Body of pancreas (tissue), 4 donors: ENCODE measurements at regions of chr7 and their contacts with region 1.

Region 1: DNA sequence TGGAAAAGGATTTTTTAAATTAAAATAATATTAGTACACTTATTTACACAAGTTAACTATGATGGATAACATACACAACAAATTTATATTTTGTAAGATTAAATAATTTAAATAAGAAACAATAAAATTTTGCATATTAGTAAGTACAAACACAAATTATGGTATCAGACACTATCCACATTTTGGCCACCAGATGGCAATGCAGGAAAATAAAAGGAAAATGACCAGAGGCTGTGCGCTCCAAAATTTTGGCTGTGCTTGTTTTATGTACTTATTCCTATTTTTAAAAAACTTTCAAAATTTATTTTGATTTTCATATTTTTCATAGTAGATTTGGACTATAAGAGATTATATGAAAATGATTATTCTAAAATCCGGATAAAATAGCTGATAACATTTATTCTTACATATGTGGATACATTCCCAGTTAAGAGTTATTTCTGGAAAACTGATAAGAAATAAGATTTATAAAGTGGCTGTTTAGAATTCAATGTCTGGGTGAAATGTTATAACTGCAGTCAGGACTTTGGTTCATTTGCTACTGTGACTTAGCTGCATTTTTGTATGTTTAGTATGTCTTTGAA is 274.7 kb upstream of the HGF start:
- DNase-seq: peak; percentile 33 to 49 (median 48)
- ATAC-seq: peak; percentile 67
- H3K4me3 ChIP-seq: no peak overlapping the region
- H3K27ac ChIP-seq: no peak overlapping the region
- H3K4me1 ChIP-seq: no peaks in the 10 kb centered on the region
- H3K27me3 ChIP-seq: no peaks in the 10 kb centered on the region
- CTCF ChIP-seq: peak; percentile 13 to 71 (median 68)
- POLR2A ChIP-seq: no peak

Region 2: DNA sequence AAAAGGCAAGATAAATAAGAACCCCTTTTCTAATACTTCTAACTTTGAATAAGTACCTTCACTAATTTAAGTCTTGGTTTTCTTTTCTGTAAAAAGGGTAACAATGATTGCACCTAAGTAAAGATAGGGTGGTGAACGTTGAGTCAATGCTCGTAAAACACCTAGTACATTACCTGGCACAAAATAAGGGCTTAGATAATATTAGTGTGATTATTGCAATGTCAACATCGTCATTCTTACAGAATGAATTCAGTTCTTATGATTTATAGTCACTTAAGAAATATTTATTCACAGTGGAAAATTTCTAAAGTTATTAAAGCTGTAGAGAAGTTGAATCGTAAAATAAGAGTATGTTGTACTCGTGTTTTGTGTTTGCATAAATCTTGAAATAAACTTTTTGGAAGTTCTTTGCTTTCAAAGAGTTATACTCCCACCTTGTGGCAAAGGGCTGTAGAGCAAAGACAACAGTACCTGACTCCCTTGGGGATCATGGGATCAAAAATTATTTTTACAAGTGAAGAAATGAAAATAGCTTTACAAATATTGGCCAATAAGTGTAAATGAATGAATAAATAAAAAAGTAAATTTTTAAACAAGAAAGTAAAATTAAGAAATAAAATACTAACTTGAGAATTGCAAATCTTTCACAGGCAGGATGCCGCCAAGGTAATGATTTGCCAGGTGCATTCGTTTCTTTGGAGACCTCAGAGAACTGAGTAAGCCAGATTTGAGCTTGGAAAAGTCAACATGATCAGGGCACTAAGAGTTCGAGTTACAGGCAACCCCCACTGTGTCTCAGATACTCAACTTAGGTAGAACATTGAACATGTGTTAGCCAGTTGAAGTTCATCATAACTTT is 684.8 kb after region 1 on chr7:
- intact Hi-C with region 1: loop called (anchors 10 kb)
- DNase-seq: peak in 2 of 4 donors; percentile 18 to 24
- ATAC-seq: peak; percentile 53
- H3K4me3 ChIP-seq: no peak overlapping the region
- H3K27ac ChIP-seq: no peak overlapping the region
- H3K4me1 ChIP-seq: no peaks in the 10 kb centered on the region
- H3K27me3 ChIP-seq: no peaks in the 10 kb centered on the region
- CTCF ChIP-seq: peak in 6 of 7 experiments; percentile 44 to 69 (median 59)
- POLR2A ChIP-seq: no peak